Activated naive CD8-positive, alpha-beta T cell treated with anti-CD3 and anti-CD28 coated beads, Interleukin-2, amount 10 ng/mL, durations not matched to agents 7 days and 5 days (primary cell): ENCODE measurements at regions of chr10 and their contacts with region 1.

Region 1: DNA sequence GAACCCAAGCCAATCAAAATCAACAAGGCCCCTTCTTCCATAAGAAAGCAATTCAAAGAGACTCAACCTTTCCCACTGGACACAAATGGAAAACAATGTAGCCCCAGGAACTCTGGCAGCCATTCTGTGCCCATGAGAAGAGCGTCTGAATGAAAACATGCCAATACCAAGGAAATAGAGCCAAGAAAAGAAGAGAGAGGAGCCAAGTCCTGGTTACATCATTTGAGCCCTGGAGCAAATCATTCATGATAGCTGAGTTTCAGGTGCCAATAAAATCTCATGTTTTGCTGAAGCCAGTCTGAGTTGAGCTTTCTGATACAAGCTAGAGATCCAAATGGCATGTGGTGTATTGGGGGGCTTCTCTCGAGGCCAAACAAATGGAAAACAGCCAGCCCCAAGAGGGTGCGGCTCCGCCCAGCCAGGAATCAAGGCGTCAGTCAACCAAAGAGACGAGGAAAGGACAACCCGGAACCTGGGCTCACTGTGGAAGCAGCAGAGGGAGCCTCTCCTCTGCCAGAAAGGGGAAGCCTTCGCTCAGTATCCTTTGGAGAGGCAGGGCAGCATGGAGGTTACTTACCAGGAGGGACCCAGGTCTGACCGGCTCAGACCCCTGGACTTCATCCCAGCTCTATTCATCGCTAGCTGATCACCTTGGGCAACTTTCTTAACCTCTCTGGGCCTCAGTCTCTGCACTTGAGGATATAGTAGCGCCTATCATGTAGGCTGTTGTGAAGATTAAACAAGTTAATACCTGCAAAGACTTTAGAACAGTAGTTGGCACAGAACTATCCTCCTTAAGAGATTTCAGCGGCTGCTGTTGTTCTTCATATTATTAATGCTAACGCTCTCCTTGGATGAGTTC is 61.8 kb downstream of the OAT start:
- DNase-seq: no peak
- ATAC-seq: no peak
- H3K4me3 Mint-ChIP-seq: no peak overlapping the region
- H3K27ac Mint-ChIP-seq: no peak overlapping the region
- H3K4me1 Mint-ChIP-seq: peaks cover 11% of the 10 kb centered on the region
- H3K27me3 Mint-ChIP-seq: peaks cover 7% of the 10 kb centered on the region

Region 2: DNA sequence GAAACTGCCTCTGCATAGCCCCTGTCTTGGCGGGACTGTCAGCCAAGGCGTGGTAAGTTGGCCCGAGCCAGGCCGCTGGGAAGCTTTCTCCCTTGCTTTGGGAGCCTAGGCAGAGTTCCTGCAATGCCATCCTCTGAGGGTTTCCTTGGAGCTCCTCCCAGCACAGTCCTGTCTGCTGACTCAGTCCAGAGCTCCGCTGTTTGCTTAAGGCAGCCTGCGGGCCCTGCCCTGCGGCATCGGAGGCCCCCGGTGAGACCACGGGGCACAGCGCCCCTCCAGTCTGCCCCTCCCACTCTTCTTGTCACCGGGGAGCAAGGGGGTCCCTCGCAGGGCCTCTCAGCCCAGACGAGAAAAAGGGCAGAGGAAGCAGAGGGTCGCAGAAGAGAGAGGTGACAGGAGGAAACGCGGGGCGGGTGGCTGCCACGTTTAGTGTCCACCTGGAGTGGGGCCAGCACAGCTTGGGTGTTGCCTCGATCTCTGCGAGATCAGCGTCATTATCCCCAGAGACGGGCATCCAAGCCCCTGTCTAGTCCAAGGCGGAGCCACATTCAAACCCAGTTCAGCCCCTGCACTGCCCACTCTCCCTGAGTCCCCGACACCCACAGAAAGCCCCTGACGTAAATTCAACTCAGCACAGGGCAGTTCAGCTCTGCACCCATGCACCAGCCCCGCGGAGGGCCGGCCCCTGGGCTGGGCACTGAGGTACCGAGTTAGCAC is 204.6 kb before region 1 on chr10:
- POLR2A ChIA-PET with region 1: interaction called, 10 read pairs
- DNase-seq: no peak
- ATAC-seq: peak; percentile 8
- H3K4me3 Mint-ChIP-seq: no peak overlapping the region
- H3K27ac Mint-ChIP-seq: no peak overlapping the region
- H3K4me1 Mint-ChIP-seq: peaks cover 15% of the 10 kb centered on the region
- H3K27me3 Mint-ChIP-seq: peaks cover 32% of the 10 kb centered on the region

Region 3: DNA sequence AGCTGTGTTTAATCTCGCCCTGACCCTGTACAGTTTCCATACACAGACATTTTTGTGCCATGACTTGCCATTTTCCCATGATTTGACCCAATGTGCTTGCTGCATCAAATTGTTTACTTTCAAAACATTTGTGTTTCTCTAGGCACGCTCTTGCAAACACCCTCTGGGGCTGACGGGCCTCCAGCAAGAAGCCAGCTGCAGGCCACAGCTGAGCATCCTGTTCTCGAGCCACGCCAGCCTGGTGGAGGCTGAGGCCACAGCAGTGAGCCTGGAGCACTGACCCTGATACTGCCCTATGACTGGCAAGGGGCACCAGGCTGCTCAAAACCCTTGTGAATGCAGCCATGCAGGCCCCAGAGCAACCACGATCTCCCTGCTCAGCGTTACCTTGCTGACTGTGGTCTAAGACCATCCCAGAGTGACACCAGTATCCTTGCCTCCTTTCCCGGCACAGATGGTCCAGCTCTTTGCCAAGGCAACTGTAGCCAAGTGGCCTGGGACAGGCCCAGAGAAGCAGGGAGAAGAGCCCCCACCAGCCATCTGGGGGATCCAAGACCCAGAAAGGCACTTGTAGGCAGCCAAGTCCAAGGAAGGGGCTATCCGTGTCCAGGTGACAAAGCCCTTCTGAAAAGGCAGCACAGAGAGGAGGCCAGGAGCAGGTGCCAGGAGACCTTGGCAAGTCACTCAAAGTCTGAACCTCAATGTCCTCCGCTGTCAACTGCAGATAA is 16.7 kb before region 1 on chr10:
- POLR2A ChIA-PET with region 1: no interaction called
- DNase-seq: no peak
- ATAC-seq: no peak
- H3K4me3 Mint-ChIP-seq: no peak overlapping the region
- H3K27ac Mint-ChIP-seq: no peak overlapping the region
- H3K4me1 Mint-ChIP-seq: peaks cover 10% of the 10 kb centered on the region
- H3K27me3 Mint-ChIP-seq: no peaks in the 10 kb centered on the region

Region 4: GRCh38 chr10:124388823-124389612 is 32.1 kb after region 1 on chr10:
- POLR2A ChIA-PET with region 1: no interaction called
- DNase-seq: peak; percentile 98
- ATAC-seq: peak; percentile 99
- H3K4me3 Mint-ChIP-seq: peak overlapping the region; percentile 52
- H3K27ac Mint-ChIP-seq: no peak overlapping the region
- H3K4me1 Mint-ChIP-seq: no peaks in the 10 kb centered on the region
- H3K27me3 Mint-ChIP-seq: no peaks in the 10 kb centered on the region